ENCODE measurements at regions of chr6 and their contacts with region 1.

Region 1: GRCh38 chr6:28838634-28839442 is 84.9 kb downstream of the TRIM27 start:
- DNase-seq: peak; percentile 74 to 82 (median 76)
- H3K4me3 ChIP-seq: peak overlapping the region; percentile 72 to 80
- H3K4me3 Mint-ChIP-seq: peak overlapping the region; percentile 91 to 97 (median 94)
- H3K27ac ChIP-seq: peak overlapping the region; percentile 42
- H3K27ac Mint-ChIP-seq: peak overlapping the region; percentile 70 to 100 (median 92)
- H3K4me1 ChIP-seq: peaks cover 13% of the 10 kb centered on the region
- H3K4me1 Mint-ChIP-seq: peaks cover 12 to 24% (median 18%) of the 10 kb centered on the region in 4 donors
- H3K27me3 ChIP-seq: no peaks in the 10 kb centered on the region
- H3K27me3 Mint-ChIP-seq: peaks cover 22 to 28% of the 10 kb centered on the region in 2 donors

Region 2: DNA sequence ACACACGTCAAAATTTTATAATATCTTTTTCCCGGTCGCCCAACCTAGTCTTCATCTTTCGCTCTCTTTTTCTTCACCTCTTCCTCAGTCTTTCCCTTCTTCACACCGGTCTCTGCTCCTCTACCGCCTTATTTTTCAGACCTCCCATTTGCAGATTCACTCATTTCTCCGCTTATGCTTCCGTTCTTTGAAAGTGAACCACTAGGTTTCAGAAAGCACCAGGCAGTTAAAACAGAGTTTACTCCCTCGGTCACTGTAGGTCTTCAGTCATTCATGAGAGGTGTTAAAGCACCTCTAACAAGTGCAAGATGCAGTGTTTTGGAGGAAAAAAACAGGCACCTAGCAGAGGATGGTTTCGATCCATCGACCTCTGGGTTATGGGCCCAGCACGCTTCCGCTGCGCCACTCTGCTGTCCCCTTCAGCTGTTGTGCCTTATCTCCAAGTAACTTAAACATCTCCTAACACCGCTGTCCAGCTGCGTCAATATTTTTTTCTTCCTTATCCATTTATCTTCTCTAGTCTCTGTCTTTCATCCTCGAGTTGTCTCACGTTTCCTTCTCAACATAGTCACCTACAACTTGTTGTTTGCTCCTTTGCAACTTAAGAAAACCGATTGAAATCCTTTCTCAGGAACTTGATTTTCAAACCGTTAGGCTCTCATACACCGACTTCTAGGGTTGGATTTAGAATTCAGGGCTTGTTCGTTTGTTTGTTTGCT is 1246.2 kb before region 1 on chr6:
- CTCF ChIA-PET with region 1: no interaction called
- POLR2A ChIA-PET with region 1: no interaction called
- intact Hi-C with region 1: no loop called
- DNase-seq: peak in 4 of 5 donors; percentile 22 to 35 (median 27)
- H3K4me3 ChIP-seq: no peak overlapping the region
- H3K4me3 Mint-ChIP-seq: no peak overlapping the region
- H3K27ac ChIP-seq: no peak overlapping the region
- H3K27ac Mint-ChIP-seq: no peak overlapping the region
- H3K4me1 ChIP-seq: peaks cover 16% of the 10 kb centered on the region
- H3K4me1 Mint-ChIP-seq: no peaks in the 10 kb centered on the region
- H3K27me3 ChIP-seq: peaks cover 31% of the 10 kb centered on the region
- H3K27me3 Mint-ChIP-seq: peaks cover 25 to 28% of the 10 kb centered on the region in 2 donors

Region 3: GRCh38 chr6:27902335-27903314 is 936.2 kb before region 1 on chr6:
- CTCF ChIA-PET with region 1: no interaction called
- POLR2A ChIA-PET with region 1: no interaction called
- intact Hi-C with region 1: loop called (anchors 2 kb)
- DNase-seq: peak; percentile 87 to 91 (median 90)
- H3K4me3 ChIP-seq: peak overlapping the region; percentile 53
- H3K4me3 Mint-ChIP-seq: peak overlapping the region; percentile 87 to 98 (median 90)
- H3K27ac ChIP-seq: peak overlapping the region; percentile 51
- H3K27ac Mint-ChIP-seq: peak overlapping the region; percentile 94 to 100 (median 97)
- H3K4me1 ChIP-seq: peaks cover 5% of the 10 kb centered on the region
- H3K4me1 Mint-ChIP-seq: peaks cover 0 to 12% (median 4%) of the 10 kb centered on the region in 4 donors
- H3K27me3 ChIP-seq: peaks cover 4% of the 10 kb centered on the region
- H3K27me3 Mint-ChIP-seq: peaks cover 8 to 10% of the 10 kb centered on the region in 2 donors

Region 4: GRCh38 chr6:28863604-28864320 is 24.9 kb after region 1 on chr6:
- CTCF ChIA-PET with region 1: interaction called, 65 read pairs
- POLR2A ChIA-PET with region 1: interaction called, 25 read pairs
- intact Hi-C with region 1: loop called (anchors 1 kb)
- DNase-seq: peak; percentile 88 to 91 (median 89)
- H3K4me3 ChIP-seq: peak overlapping the region; percentile 53 to 85
- H3K4me3 Mint-ChIP-seq: peak overlapping the region; percentile 92 to 97 (median 94)
- H3K27ac ChIP-seq: peak overlapping the region; percentile 45
- H3K27ac Mint-ChIP-seq: peak overlapping the region; percentile 79 to 99 (median 97)
- H3K4me1 ChIP-seq: peaks cover 14% of the 10 kb centered on the region
- H3K4me1 Mint-ChIP-seq: peaks cover 21 to 64% (median 43%) of the 10 kb centered on the region in 4 donors
- H3K27me3 ChIP-seq: no peaks in the 10 kb centered on the region
- H3K27me3 Mint-ChIP-seq: peaks cover 4 to 5% of the 10 kb centered on the region in 2 donors

Region 5: DNA sequence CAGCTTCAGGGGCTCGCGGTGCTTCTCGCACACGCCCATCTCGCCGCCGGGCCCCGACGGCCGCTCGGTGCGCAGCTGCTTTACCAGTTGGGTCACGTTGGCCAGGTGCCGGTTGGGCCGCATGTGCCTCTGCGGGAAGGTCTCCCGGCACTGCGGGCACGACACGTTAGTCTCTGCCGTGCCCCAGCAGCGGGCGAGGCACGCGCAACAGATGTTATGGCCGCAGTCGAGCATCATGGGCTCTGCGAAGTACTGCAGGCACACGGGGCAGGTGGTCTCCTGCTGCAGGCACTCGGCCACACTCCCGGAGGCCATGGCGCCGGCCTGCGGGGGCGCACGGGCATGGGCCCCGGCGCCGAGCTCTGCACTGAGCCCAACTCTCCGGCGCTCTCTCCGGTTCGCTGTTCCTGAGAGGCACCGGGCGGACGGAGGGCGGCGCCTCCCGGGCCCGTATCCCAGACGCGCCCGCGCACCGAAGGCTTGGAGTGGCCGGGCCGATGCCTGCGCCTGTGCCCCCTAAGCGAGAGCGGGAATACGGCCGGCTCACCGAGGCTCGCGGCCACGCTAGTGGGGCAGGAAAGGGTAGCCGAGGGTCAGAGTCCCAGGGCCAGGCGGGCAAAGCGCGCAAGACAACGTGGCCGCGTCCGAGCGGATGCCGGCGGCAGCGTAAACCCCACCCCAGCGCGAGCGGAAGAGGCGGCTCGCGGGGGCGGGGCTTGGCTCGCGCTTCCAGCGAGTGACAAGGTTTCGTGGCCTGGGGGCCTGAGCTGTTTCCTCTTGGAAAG is 84.7 kb after region 1 on chr6 and contains the start of gene TRIM27:
- CTCF ChIA-PET with region 1: interaction called, 34 read pairs
- POLR2A ChIA-PET with region 1: interaction called, 48 read pairs
- intact Hi-C with region 1: loop called (anchors 1 kb)
- DNase-seq: peak; percentile 76 to 84 (median 78)
- H3K4me3 ChIP-seq: peak within 1 kb of the TSS; percentile 82 to 91
- H3K4me3 Mint-ChIP-seq: peak within 1 kb of the TSS; percentile 92 to 98 (median 95)
- H3K27ac ChIP-seq: peak within 1 kb of the TSS; percentile 82
- H3K27ac Mint-ChIP-seq: peak within 1 kb of the TSS; percentile 86 to 96 (median 94)
- H3K4me1 ChIP-seq: peaks cover 46% of the 10 kb centered on the region
- H3K4me1 Mint-ChIP-seq: peaks cover 30 to 49% (median 41%) of the 10 kb centered on the region in 4 donors
- H3K27me3 ChIP-seq: no peaks in the 10 kb centered on the region
- H3K27me3 Mint-ChIP-seq: peaks cover 0 to 2% of the 10 kb centered on the region in 2 donors
- total RNA-seq, gene TRIM27: 102 to 108 TPM

Region 6: DNA sequence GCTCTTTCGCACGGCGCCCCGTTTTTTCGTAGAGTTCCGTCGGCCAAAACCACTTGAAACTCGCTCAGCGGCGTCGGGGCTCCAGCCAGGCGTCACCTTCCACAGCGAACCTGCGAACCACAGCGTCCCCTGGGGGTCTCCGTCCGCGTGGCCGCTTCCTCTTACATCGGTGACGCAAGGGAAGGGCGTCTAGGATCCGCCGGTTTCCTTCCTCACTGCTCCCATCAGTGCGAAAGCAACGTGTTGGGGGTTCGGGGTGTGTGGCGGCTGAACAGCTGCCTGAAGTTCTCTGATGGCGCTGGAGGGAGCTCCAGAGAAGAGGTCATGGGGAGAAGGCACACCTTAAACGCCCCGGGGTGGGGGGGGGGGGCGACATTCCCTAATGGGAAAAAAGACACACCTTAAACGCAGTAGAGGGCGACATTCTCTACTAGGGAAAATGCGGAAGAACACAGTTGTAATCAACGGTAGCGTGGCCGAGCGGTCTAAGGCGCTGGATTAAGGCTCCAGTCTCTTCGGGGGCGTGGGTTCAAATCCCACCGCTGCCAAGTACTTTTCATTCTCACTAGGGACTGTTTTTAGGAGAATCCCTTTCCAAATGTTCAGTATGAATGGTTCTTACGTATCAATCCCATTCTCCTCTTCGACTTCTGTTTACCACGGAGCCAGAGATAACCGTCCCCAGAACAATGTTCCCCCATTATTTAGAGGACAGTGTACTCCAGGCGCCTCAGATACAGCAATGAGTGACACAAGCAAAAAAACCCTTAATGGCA is 149.9 kb after region 1 on chr6:
- CTCF ChIA-PET with region 1: interaction called, 23 read pairs
- POLR2A ChIA-PET with region 1: interaction called, 8 read pairs
- intact Hi-C with region 1: loop called (anchors 1 kb)
- DNase-seq: peak; percentile 69 to 77 (median 70)
- H3K4me3 ChIP-seq: peak overlapping the region; percentile 17 to 34
- H3K4me3 Mint-ChIP-seq: peak overlapping the region; percentile 76 to 89 (median 83)
- H3K27ac ChIP-seq: no peak overlapping the region
- H3K27ac Mint-ChIP-seq: peak overlapping the region in 5 of 7 donors; percentile 41 to 84 (median 72)
- H3K4me1 ChIP-seq: peaks cover 11% of the 10 kb centered on the region
- H3K4me1 Mint-ChIP-seq: peaks cover 18 to 40% (median 24%) of the 10 kb centered on the region in 4 donors
- H3K27me3 ChIP-seq: no peaks in the 10 kb centered on the region
- H3K27me3 Mint-ChIP-seq: peaks cover 10 to 16% of the 10 kb centered on the region in 2 donors

Region 7: GRCh38 chr6:29632789-29633533 is 794.1 kb after region 1 on chr6 and contains the start of gene GABBR1:
- CTCF ChIA-PET with region 1: no interaction called
- POLR2A ChIA-PET with region 1: no interaction called
- intact Hi-C with region 1: loop called (anchors 5 kb)
- DNase-seq: peak; percentile 61 to 80 (median 69)
- H3K4me3 ChIP-seq: peak within 1 kb of the TSS in 1 of 2 donors; percentile 59
- H3K4me3 Mint-ChIP-seq: peak within 1 kb of the TSS; percentile 87 to 95 (median 92)
- H3K27ac ChIP-seq: peak within 1 kb of the TSS; percentile 37
- H3K27ac Mint-ChIP-seq: peak within 1 kb of the TSS; percentile 82 to 97 (median 91)
- H3K4me1 ChIP-seq: peaks cover 50% of the 10 kb centered on the region
- H3K4me1 Mint-ChIP-seq: peaks cover 39 to 59% (median 47%) of the 10 kb centered on the region in 4 donors
- H3K27me3 ChIP-seq: no peaks in the 10 kb centered on the region
- H3K27me3 Mint-ChIP-seq: no peaks in the 10 kb centered on the region
- total RNA-seq, gene GABBR1: 58.1 to 58.9 TPM

Measured in CD4-positive, alpha-beta memory T cell (primary cell).